ENCODE measurements at regions of chr1 and their contacts with region 1.

Region 1: DNA sequence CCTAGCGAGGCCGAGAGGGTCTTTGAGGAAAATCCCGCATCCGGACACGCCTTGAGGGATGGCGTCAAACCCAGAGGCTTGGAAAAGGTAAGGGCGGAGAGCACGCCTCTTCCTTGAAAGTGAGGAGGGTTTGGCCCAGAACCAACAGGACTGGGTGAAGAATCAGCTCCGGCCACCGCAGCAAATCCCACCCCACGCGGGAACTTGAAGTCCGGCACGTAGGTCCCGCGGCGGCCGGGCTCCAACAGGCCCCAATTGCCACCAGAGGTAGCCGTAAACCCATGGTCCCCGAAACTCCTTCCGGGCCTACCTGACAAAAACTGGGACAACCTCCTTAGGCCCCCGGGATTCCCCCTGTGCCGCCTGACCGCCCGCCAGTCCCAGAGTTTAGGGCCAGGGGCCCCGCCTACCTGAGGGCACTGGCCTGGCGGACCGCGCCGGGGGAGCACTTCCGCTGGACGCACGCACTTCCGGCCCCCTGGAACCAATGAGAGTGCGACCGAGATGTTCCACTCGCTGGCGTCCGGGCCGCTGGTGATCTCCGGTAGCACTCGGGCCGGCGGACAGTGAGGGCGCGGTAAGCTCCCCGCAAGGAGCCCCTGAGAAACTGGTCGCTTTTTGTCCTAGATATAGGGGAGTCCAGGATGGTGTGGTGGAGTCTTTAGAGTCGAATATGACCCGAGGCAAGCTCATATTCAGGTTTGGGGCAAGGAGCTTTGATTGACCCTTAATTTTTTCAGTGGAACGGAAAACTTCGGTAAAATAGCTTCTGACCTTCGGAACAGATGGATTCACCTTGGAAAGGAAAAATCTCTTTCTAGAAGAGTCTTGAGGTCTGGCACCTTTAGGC is at the starts of genes LZIC and NMNAT1:
- DNase-seq: peak; percentile 95
- ATAC-seq: peak; percentile 97
- H3K4me3 Mint-ChIP-seq: peak within 1 kb of the TSS; percentile 96
- H3K27ac Mint-ChIP-seq: peak within 1 kb of the TSS; percentile 98
- H3K4me1 Mint-ChIP-seq: peaks cover 18% of the 10 kb centered on the region
- H3K27me3 Mint-ChIP-seq: no peaks in the 10 kb centered on the region
- total RNA-seq, gene LZIC: 23.4 to 32.0 TPM
- total RNA-seq, gene NMNAT1: 7.3 to 8.5 TPM

Region 2: DNA sequence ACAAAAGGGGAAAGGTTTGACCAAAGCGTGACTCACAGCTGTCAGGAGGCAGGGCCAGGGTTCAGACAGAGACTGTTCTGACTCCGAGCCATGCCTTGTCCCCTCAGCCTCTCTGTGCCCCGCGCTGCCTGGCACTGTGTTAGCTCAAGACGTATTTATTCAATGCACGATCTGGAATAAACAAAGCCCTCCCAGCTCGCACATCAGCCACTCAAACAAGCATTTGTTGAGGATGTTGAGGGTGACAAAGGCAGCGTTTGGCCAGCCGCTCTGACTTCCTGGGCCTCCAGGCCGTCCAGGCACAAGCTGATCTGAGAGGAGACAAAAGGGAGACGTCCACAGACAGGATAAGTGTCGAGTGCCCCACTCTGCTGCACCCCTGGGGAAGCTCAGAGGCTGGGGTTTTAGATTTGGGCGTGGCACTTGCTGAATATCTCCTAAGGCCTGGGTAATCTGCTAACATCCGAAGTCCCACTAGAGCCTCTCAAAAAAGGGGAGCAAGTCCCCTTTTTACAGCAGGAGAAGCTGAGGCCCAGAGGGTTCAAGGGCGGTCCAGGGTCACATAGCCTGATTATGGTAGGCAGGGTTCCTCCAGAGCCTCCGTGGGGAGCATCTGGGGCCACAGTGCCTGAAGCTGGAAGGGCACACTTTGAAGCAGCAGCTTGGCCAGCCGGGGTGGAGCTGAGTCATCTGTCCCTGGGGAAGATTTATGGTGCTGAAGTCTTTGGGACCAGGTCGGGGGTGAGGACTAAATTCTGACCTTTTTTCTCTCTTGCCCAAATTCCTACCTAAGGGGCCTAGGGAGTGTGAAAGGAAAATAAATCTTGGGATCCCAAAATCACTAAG is 554.6 kb before region 1 on chr1:
- CTCF ChIA-PET with region 1: no interaction called
- POLR2A ChIA-PET with region 1: no interaction called
- intact Hi-C with region 1: no loop called
- DNase-seq: no peak
- ATAC-seq: no peak
- H3K4me3 Mint-ChIP-seq: no peak overlapping the region
- H3K27ac Mint-ChIP-seq: no peak overlapping the region
- H3K4me1 Mint-ChIP-seq: peaks cover 5% of the 10 kb centered on the region
- H3K27me3 Mint-ChIP-seq: no peaks in the 10 kb centered on the region

Region 3: GRCh38 chr1:9629445-9630201 is 313.5 kb before region 1 on chr1:
- CTCF ChIA-PET with region 1: interaction called, 6 read pairs
- POLR2A ChIA-PET with region 1: no interaction called
- intact Hi-C with region 1: loop called in 1 of 2 experiments (anchors 1 kb)
- DNase-seq: peak; percentile 88
- ATAC-seq: peak; percentile 45
- H3K4me3 Mint-ChIP-seq: peak overlapping the region; percentile 87
- H3K27ac Mint-ChIP-seq: peak overlapping the region; percentile 95
- H3K4me1 Mint-ChIP-seq: peaks cover 64% of the 10 kb centered on the region
- H3K27me3 Mint-ChIP-seq: peaks cover 2% of the 10 kb centered on the region

Region 4: GRCh38 chr1:9874959-9875635 is 68.1 kb before region 1 on chr1:
- CTCF ChIA-PET with region 1: interaction called, 4 read pairs
- POLR2A ChIA-PET with region 1: no interaction called
- intact Hi-C with region 1: loop called (anchors 1 kb)
- DNase-seq: peak; percentile 86
- ATAC-seq: peak; percentile 96
- H3K4me3 Mint-ChIP-seq: no peak overlapping the region
- H3K27ac Mint-ChIP-seq: no peak overlapping the region
- H3K4me1 Mint-ChIP-seq: peaks cover 3% of the 10 kb centered on the region
- H3K27me3 Mint-ChIP-seq: no peaks in the 10 kb centered on the region

Region 5: GRCh38 chr1:10152709-10153284 is 209.6 kb after region 1 on chr1:
- CTCF ChIA-PET with region 1: no interaction called
- POLR2A ChIA-PET with region 1: no interaction called
- intact Hi-C with region 1: loop called in 1 of 2 experiments (anchors 2 kb)
- DNase-seq: peak; percentile 70
- ATAC-seq: peak; percentile 42
- H3K4me3 Mint-ChIP-seq: no peak overlapping the region
- H3K27ac Mint-ChIP-seq: no peak overlapping the region
- H3K4me1 Mint-ChIP-seq: no peaks in the 10 kb centered on the region
- H3K27me3 Mint-ChIP-seq: no peaks in the 10 kb centered on the region

Region 6: GRCh38 chr1:10398734-10399623 is 455.8 kb after region 1 on chr1 and contains the start of gene PGD:
- CTCF ChIA-PET with region 1: no interaction called
- POLR2A ChIA-PET with region 1: no interaction called
- intact Hi-C with region 1: loop called in 1 of 2 experiments (anchors 1 kb)
- DNase-seq: peak; percentile 99
- ATAC-seq: peak; percentile 97
- H3K4me3 Mint-ChIP-seq: peak within 1 kb of the TSS; percentile 86
- H3K27ac Mint-ChIP-seq: peak within 1 kb of the TSS; percentile 78
- H3K4me1 Mint-ChIP-seq: peaks cover 31% of the 10 kb centered on the region
- H3K27me3 Mint-ChIP-seq: no peaks in the 10 kb centered on the region
- total RNA-seq, gene PGD: 91.6 to 93.7 TPM